ENCODE measurements at regions of chr16 and their contacts with region 1.

Region 1: GRCh38 chr16:51302042-51302441 is 151.0 kb upstream of the SALL1 start:
- DNase-seq: no peak
- ATAC-seq: no peak
- H3K4me3 ChIP-seq: no peak overlapping the region
- H3K27ac ChIP-seq: no peak overlapping the region
- H3K4me1 ChIP-seq: no peaks in the 10 kb centered on the region
- H3K27me3 ChIP-seq: no peaks in the 10 kb centered on the region
- CTCF ChIP-seq: no peak

Region 2: DNA sequence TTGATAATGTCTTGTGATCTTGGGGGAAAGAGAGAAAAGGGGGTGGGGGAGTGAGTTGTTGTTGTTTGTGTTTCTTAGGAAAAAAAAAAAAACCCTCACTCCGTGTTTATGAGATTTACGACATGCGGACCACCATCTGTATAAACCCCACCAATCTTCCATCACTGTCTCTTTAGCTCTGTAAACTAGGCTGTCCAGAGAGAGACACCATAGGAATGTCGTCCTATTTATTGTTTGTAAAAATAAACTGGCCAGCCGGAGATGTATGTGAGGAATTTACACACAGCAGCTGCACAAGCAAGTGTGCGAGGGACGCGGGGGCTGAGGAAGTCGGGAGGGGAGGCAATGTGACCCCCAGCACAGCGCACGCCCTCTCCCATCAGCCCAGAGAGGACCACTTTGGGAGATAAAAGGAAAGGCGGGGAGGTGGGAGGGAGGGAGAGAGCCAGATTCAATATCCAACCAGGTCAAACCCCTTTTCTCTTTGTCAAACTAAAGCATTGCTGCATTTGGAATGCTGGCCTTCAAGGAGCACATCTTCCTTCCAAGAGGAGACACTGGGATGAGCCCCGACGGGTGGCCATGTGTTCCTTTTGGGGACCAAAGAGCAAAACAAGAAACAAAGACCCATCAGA is 14.8 kb before region 1 on chr16:
- intact Hi-C with region 1: loop called in 1 of 10 experiments (anchors 2 kb)
- DNase-seq: no peak
- ATAC-seq: no peak
- H3K4me3 ChIP-seq: no peak overlapping the region
- H3K27ac ChIP-seq: no peak overlapping the region
- H3K4me1 ChIP-seq: no peaks in the 10 kb centered on the region
- H3K27me3 ChIP-seq: no peaks in the 10 kb centered on the region
- CTCF ChIP-seq: no peak